ENCODE measurements at regions of chr9 and their contacts with region 1.

Region 1: DNA sequence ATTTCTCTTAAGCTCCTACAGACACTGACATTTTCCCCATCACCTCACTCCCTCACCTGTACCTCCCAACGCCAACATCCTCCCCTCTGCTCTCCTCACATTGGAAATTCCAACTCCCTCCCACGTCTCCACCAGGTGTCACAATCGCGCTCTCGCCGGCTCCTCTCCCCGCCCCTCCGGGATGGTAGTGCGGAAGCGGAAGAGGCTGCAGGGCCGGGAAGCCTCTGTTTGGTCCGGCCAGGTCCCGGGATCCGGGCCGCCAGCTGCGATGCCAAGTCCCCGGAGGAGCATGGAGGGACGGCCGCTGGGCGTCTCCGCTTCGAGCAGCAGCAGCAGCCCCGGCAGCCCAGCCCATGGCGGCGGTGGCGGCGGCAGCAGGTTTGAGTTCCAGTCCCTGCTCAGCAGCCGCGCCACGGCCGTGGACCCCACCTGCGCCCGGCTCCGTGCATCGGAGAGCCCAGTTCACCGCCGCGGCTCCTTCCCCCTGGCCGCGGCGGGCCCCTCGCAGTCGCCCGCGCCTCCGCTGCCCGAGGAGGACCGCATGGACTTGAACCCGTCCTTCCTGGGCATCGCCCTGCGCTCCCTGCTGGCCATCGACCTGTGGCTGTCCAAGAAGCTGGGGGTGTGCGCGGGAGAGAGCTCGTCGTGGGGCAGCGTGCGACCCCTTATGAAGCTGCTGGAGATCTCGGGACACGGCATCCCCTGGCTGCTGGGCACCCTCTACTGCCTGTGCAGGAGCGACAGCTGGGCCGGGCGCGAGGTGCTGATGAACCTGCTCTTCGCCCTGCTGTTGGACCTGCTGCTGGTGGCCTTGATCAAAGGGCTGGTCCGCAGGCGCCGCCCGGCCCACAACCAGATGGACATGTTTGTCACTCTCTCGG is at the start of gene PLPP6:
- DNase-seq: peak; percentile 91
- H3K4me3 ChIP-seq: peak within 1 kb of the TSS; percentile 77 to 81
- H3K27ac ChIP-seq: peak within 1 kb of the TSS; percentile 69 to 84
- H3K4me1 ChIP-seq: no peaks in the 10 kb centered on the region
- H3K27me3 ChIP-seq: no peaks in the 10 kb centered on the region
- CTCF ChIP-seq: peak; percentile 31 to 58 (median 47)
- POLR2A ChIP-seq: no peak
- total RNA-seq, gene PLPP6: 9.5 to 10.4 TPM

Region 2: DNA sequence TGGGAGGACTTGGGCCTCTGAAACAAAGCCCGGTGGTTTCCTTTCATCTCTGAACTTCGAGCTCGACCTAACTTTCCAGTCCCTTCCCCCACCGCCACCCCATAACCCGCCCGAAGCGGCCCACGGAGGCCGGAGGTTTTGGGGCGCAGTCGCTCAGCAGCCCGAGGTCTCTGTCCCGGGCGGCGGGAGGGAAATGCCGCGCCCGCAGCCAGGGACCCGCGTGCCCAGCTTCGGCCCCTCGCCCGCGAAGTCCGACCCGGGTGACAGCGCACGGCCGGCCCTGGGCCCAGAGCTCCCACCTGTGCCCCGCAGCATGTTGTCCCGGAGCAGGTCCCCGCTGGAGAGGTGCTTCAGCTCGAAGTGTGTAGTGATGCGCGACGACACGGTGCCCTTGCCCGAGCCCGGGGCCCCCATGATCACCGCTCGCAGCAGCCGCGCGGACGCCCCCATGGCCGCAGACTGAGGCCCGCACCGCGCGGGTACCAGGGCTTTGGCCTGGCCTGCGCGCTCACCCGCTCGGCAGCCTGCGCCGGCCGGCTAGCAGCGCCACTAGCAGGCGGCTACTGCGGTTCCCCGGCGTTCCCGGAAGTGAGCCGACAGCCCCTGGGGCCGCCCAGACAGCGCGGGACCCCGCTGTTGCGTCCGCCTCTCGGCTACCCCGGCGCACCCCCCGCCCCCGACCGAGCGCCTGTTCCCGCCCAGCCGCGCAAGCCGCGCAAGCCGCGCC is 78.5 kb after region 1 on chr9 and contains the start of gene AK3:
- intact Hi-C with region 1: loop called (anchors 5 kb)
- DNase-seq: peak; percentile 84
- H3K4me3 ChIP-seq: peak within 1 kb of the TSS; percentile 86 to 90
- H3K27ac ChIP-seq: peak within 1 kb of the TSS; percentile 92 to 94
- H3K4me1 ChIP-seq: peaks cover 8% of the 10 kb centered on the region
- H3K27me3 ChIP-seq: no peaks in the 10 kb centered on the region
- CTCF ChIP-seq: no peak
- POLR2A ChIP-seq: peak; percentile 26
- total RNA-seq, gene AK3: 18.3 to 24.1 TPM